Activated B cell treated with CpG ODN at 0.5 μM for 24 hours (primary cell): ENCODE measurements at regions of chr10 and their contacts with region 1.

Region 1: GRCh38 chr10:26939290-26939961 is 78.7 kb upstream of the ABI1 start:
- DNase-seq: no peak
- ATAC-seq: no peak
- H3K4me3 Mint-ChIP-seq: no peak overlapping the region
- H3K27ac Mint-ChIP-seq: no peak overlapping the region
- H3K4me1 Mint-ChIP-seq: peaks cover 2% of the 10 kb centered on the region
- H3K27me3 Mint-ChIP-seq: peaks cover 2% of the 10 kb centered on the region
- CTCF ChIP-seq: no peak

Region 2: GRCh38 chr10:26588611-26589010 is 350.8 kb before region 1 on chr10:
- CTCF ChIA-PET with region 1: no interaction called
- POLR2A ChIA-PET with region 1: no interaction called
- intact Hi-C with region 1: loop called (anchors 5 kb)
- DNase-seq: no peak
- ATAC-seq: no peak
- H3K4me3 Mint-ChIP-seq: no peak overlapping the region
- H3K27ac Mint-ChIP-seq: no peak overlapping the region
- H3K4me1 Mint-ChIP-seq: no peaks in the 10 kb centered on the region
- H3K27me3 Mint-ChIP-seq: no peaks in the 10 kb centered on the region
- CTCF ChIP-seq: no peak